Astrocyte of the cerebellum (primary cell): ENCODE measurements at regions of chr3 and their contacts with region 1.

Region 1: GRCh38 chr3:129824926-129825541 is 68.5 kb downstream of the TMCC1 start:
- DNase-seq: peak; percentile 44
- H3K4me3 ChIP-seq: no peak overlapping the region
- CTCF ChIP-seq: peak; percentile 71

Region 2: DNA sequence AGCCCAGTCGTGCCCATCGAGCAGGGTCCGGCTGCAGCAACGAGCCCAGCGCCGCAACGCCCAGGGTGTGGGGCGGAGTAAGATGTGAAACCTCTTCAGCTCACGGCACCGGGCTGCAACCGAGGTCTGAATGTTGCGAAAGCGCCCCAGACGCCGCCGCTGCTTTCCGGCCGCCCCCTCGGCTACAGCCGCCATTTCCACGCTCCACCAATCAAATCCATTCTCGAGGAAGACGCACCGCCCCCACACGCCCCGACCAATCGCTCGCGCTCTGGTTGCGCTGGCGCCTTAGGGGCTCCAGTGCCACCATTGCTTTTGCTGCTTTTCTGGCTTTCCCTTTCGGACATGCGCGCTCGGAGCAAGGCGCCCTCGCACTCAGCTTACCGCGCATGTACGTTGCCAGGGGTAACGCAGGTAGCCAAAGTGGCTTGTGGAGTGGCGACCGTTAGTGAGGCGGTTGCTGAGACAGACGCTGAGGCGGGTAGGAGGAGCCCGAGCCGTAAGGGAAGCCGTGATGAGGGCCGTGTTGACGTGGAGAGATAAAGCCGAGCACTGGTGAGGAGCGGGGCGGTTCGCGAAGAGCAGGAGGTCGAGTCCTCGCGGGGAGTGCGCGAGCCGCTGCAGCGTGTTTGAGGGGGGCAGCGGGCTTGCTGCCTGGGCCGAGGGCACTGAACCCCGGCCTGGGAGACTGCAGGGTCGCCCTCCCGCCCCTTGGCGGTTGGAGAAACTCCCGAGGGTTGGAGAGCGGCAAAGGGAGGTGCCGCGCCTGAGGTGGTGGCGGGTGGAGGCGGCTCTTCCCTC is 385.0 kb before region 1 on chr3 and contains the starts of genes IFT122 and MBD4:
- in situ Hi-C with region 1: loop called (anchors 25 kb)
- DNase-seq: peak; percentile 98
- H3K4me3 ChIP-seq: peak within 1 kb of the TSS; percentile 97
- CTCF ChIP-seq: no peak

Region 3: DNA sequence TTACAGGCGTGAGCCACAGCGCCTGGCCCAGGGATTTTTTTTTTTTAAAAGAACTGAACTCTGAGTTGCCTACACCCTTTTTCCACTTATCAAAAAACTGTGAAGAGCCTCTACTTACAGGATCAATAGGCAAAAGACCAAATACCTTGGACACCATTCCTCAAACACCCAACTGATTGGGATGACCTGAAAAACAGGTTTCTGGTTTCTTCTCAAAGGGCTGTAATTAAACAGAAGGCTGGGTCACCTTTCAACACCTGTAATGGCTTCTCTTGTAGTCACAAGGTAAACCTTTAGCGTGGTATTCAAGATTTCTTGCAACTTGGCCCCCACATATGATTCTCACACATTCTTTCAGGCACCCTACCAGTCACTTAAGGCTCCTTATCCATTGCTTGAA is 180.2 kb before region 1 on chr3:
- in situ Hi-C with region 1: loop called (anchors 5 kb)
- DNase-seq: no peak
- H3K4me3 ChIP-seq: no peak overlapping the region
- CTCF ChIP-seq: no peak

Region 4: GRCh38 chr3:129893581-129894070 is 68.6 kb after region 1 on chr3 and contains the start of gene TMCC1:
- in situ Hi-C with region 1: no loop called
- DNase-seq: peak; percentile 33
- H3K4me3 ChIP-seq: peak within 1 kb of the TSS; percentile 88
- CTCF ChIP-seq: no peak